Mammary epithelial cell (primary cell): ENCODE measurements at regions of chr10 and their contacts with region 1.

Region 1: DNA sequence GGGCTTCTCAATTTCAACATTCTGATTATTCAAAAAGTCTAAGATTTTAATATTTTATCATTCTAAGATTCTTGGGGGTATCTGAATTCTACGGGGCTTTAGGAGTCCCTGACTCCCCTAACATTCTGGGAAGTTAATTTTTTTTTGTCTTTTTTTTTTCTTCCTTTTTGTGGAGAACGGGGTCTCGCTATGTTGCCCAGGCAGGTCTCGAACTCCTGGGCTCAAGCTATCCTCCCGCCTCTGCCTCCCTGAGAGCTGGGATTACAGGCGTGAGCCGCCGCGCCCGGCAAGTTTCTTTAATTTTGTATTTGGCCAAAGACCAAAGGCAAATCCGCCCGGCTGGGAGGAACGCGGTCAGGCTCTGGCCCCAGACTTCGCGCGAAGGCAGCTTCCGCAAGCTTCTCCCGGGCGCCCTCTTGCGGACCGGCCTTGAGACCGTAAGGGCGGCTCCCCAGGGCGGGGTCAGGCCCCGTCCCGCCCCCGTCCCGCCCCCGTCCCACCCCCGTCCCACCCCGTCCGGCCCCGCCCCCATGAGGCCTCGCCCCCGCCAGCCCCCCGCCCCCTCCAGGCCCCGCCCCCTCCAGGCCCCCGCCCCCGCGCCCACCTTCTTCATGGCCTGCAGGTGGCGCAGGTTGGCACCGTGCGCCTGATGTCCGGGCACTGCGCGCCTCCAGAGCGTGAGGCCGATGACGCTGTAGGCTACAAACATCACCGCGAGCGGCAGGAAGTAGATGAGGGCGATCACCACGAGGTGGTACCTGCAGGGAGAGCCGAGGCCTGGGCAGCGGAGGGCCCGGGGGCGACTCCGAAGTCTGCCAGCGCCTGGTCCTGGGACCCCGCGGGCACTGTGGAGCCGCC is 8.2 kb downstream of the TACR2 start:
- DNase-seq: peak; percentile 89
- H3K4me3 ChIP-seq: peak overlapping the region in 1 of 3 experiments; percentile 48
- H3K27ac ChIP-seq: peak overlapping the region; percentile 51
- H3K4me1 ChIP-seq: peaks cover 16% of the 10 kb centered on the region
- H3K27me3 ChIP-seq: no peaks in the 10 kb centered on the region
- CTCF ChIP-seq: peak; percentile 9 to 62

Region 2: GRCh38 chr10:68208424-68209042 is 1200.0 kb before region 1 on chr10:
- CTCF ChIA-PET with region 1: no interaction called
- dilution Hi-C with region 1: no loop called
- in situ Hi-C with region 1: no loop called
- intact Hi-C with region 1: loop called (anchors 5 kb)
- DNase-seq: peak; percentile 59
- H3K4me3 ChIP-seq: no peak overlapping the region
- H3K27ac ChIP-seq: no peak overlapping the region
- H3K4me1 ChIP-seq: no peaks in the 10 kb centered on the region
- H3K27me3 ChIP-seq: no peaks in the 10 kb centered on the region
- CTCF ChIP-seq: peak; percentile 77 to 82

Region 3: GRCh38 chr10:69004821-69005220 is 403.7 kb before region 1 on chr10:
- CTCF ChIA-PET with region 1: no interaction called
- dilution Hi-C with region 1: no loop called
- in situ Hi-C with region 1: no loop called
- intact Hi-C with region 1: loop called (anchors 5 kb)
- DNase-seq: no peak
- H3K4me3 ChIP-seq: no peak overlapping the region
- H3K27ac ChIP-seq: no peak overlapping the region
- H3K4me1 ChIP-seq: no peaks in the 10 kb centered on the region
- H3K27me3 ChIP-seq: no peaks in the 10 kb centered on the region
- CTCF ChIP-seq: peak; percentile 32 to 47

Region 4: DNA sequence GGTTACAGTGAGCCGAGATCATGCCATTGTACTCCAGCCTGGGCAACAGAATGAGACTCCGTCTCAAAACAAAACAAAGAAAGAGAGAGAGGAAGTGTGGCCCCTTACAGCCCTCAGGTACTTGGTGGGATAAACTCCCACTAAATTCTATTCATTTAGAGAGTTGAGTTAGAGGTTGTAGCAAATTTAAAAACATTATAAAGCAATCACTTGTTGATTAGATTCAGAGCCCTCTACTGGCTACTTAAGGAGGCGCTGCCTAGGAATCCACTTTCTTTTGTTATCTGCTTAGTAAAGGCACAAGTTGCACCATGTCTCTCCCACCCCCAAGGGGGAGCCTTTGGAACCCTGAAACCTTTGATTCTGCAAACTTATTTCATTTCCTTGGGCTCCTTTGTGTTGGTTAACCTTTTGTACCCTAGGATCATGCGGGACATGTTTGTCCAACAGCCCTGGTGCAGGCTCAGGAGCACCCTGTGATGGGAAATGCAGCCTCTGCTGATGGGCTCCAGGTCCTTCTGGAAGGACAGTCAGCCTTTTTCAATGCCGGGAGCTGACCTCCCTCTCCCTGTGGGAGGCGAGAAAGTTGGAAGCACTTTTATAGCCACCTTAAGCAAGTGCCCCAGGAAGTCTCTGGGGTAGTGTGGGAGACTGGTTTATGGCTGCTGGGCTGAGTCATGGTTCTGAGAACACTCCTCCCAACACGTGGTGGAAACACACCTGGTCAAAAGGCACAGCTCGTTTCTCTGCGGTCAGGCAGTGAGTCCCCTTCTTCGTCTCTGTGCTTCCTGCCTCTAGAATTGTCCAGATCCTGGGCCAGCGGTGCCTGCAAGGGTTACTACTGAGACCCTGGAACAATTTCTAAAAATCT is 186.2 kb before region 1 on chr10:
- CTCF ChIA-PET with region 1: interaction called, 11 read pairs
- dilution Hi-C with region 1: loop called (anchors 5 kb)
- in situ Hi-C with region 1: no loop called
- intact Hi-C with region 1: no loop called
- DNase-seq: peak; percentile 96
- H3K4me3 ChIP-seq: peak overlapping the region in 2 of 3 experiments; percentile 13 to 22
- H3K27ac ChIP-seq: peak overlapping the region; percentile 79
- H3K4me1 ChIP-seq: peaks cover 44% of the 10 kb centered on the region
- H3K27me3 ChIP-seq: no peaks in the 10 kb centered on the region
- CTCF ChIP-seq: peak; percentile 72 to 80

Region 5: DNA sequence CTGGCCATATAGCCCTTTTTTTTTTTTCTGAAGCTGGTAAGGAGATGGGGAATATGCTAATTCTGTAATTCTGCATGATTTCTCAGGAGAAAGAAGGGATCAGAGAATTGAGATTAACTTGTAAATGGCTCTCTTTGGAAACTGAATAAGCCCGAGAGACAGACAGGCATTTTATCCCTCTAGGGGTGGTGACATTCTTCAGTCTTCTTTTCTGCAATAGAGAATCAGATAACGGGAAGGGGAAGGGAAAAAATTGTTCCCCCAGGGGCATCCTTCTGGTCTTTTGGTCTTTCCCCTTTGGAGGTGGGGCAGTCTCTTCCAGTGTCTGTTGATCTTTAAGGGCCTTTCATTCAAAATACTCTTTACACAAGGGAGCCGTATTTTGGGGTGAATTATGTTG is 96.0 kb before region 1 on chr10:
- CTCF ChIA-PET with region 1: no interaction called
- dilution Hi-C with region 1: loop called (anchors 5 kb)
- in situ Hi-C with region 1: no loop called
- intact Hi-C with region 1: no loop called
- DNase-seq: no peak
- H3K4me3 ChIP-seq: no peak overlapping the region
- H3K27ac ChIP-seq: no peak overlapping the region
- H3K4me1 ChIP-seq: peaks cover 16% of the 10 kb centered on the region
- H3K27me3 ChIP-seq: no peaks in the 10 kb centered on the region
- CTCF ChIP-seq: no peak

Region 6: DNA sequence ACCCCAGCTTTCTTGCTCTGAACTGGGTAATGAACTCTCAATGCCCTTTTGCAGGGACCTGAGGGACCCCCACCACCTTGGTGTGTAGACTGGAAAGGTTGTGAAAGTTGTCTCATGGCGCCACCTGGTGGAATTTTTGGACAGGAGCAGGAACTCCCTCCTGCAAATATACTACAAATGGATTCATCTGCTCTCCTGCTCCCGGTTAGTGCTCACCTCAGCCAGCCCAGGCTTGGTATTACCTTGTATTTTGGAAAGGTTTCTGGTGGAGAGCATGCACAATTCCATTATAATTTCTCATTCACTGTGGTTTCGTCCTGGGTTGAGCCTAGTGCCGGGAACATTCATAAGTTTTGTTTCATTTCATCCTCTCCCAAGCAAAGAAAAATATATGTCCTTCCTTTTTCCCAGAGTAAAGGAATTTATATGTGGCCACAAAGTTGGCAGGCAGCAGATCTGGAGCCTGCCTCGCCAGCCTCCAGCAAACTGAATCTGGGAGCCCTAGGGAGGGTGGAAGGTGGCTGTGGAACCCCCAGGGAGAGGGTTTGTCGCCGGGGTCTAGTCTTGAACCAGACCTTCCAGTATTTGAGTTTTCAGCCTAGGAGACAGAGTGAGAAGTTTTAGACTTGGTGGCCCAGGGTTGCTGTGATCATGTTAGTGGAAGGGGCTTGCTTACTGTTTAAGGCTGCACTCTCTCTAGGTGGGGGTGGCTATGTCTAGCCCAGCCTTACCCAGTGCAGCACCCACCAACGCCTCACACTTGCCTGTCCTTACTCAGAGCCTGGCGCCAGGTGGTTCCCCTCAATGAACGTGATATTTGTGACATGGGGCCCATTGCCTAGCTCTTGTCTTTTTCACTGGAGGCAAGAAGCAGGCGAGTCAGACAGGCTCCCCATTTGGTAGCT is 231.0 kb after region 1 on chr10:
- CTCF ChIA-PET with region 1: no interaction called
- dilution Hi-C with region 1: no loop called
- in situ Hi-C with region 1: loop called in 1 of 2 experiments (anchors 10 kb)
- intact Hi-C with region 1: loop called (anchors 5 kb)
- DNase-seq: peak; percentile 57
- H3K4me3 ChIP-seq: no peak overlapping the region
- H3K27ac ChIP-seq: peak overlapping the region; percentile 38
- H3K4me1 ChIP-seq: peaks cover 29% of the 10 kb centered on the region
- H3K27me3 ChIP-seq: no peaks in the 10 kb centered on the region
- CTCF ChIP-seq: peak; percentile 81 to 90

Region 7: GRCh38 chr10:69757553-69758309 is 349.2 kb after region 1 on chr10:
- CTCF ChIA-PET with region 1: no interaction called
- dilution Hi-C with region 1: no loop called
- in situ Hi-C with region 1: no loop called
- intact Hi-C with region 1: no loop called
- DNase-seq: peak; percentile 21
- H3K4me3 ChIP-seq: no peak overlapping the region
- H3K27ac ChIP-seq: no peak overlapping the region
- H3K4me1 ChIP-seq: no peaks in the 10 kb centered on the region
- H3K27me3 ChIP-seq: no peaks in the 10 kb centered on the region
- CTCF ChIP-seq: no peak